Thyroid gland (tissue), 4 donors: ENCODE measurements at regions of chr20 and their contacts with region 1.

Region 1: DNA sequence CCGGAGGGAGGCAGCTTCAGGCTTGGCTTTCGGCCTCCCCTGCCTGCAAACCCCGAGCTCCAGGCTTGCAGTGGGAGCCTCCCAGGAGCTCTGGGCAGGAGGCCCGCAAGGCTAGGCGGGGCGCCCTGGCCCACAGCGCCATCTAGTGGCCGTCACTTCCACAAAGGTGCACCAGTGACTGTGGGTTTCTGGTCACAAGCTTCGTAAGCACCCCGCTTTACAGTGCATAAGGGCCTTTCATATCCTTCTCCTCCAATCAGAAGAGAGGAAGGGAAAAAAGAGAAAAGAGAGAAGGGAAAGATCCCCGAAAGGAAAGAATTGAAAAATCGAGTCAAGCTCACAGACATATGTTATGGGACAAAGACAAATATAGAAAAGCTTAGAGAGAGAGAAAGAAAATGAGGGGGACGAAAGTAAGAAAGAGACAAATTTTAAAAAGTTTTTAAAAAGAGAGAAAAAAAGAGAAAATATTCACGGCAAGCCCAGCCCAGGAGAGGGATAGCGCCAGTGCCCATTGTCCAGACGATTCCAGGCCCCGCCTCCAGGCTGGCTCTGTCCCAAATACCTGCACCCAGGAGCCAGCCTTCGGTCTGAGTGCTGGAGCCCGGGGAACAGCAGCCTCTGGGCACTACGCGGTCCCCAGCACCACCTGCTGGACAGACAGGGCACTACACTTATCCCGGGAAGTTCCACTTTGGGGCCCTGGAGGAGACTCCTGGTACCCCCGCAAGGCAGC is 207.1 kb downstream of the PREX1 start:
- DNase-seq: peak; percentile 94 to 96
- H3K4me3 ChIP-seq: peak overlapping the region in 1 of 3 donors; percentile 13
- H3K27ac ChIP-seq: no peak overlapping the region
- H3K4me1 ChIP-seq: peaks cover 0 to 14% of the 10 kb centered on the region in 2 donors
- H3K27me3 ChIP-seq: no peaks in the 10 kb centered on the region
- CTCF ChIP-seq: peak; percentile 76 to 97 (median 86)
- POLR2A ChIP-seq: no peak

Region 2: GRCh38 chr20:47665221-47665991 is 955.3 kb before region 1 on chr20:
- intact Hi-C with region 1: loop called (anchors 5 kb)
- DNase-seq: no peak
- H3K4me3 ChIP-seq: no peak overlapping the region
- H3K27ac ChIP-seq: no peak overlapping the region
- H3K4me1 ChIP-seq: peaks cover 0 to 5% of the 10 kb centered on the region in 2 donors
- H3K27me3 ChIP-seq: no peaks in the 10 kb centered on the region
- CTCF ChIP-seq: no peak
- POLR2A ChIP-seq: no peak

Region 3: DNA sequence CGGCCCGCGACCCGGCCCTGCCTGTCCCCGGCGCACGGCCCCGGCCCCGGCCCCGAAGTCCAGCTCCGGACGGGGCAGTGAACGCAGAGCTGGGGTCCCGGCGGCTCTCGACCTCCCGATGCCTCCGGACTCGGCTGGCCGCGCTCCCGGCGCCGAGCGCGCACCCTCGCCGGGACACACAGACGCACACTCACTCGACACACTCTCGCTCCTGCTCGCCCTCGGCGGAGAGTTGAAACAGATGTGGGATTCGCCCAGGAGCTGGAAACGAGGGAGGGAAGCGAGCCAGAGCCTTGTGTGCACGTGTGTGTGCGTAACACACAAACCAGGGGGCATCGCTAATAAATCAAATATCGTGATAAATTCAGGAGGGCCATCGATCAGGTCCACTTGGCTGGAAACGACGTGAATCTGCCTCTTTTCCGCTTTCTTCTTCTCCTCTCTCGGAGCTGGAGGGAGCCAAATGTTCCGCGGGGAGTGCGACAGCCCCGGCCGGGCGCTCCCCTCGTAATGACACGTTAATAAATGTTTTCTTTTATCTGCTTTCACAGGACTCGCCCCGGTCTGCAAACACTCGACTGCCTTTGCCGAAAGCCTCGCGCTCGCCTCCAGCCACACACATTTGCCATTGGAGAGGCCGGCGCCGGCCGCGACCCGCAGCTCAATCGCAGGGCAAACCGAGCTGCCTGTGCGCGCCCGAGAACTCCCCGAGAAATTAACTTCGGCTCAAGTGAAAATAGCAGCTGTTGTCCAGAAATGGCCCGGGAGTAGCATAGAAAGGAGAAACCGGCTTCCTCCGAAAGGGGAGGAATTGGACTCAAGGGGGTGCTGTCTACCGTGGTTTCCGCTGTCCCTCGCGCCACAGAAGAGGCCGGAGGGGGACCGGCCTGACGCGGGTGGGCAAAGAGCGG is 834.6 kb before region 1 on chr20:
- intact Hi-C with region 1: loop called (anchors 10 kb)
- DNase-seq: peak; percentile 54 to 66
- H3K4me3 ChIP-seq: peak overlapping the region in 2 of 3 donors; percentile 26 to 30
- H3K27ac ChIP-seq: peak overlapping the region; percentile 60 to 76 (median 66)
- H3K4me1 ChIP-seq: peaks cover 8 to 30% of the 10 kb centered on the region in 2 donors
- H3K27me3 ChIP-seq: no peaks in the 10 kb centered on the region
- CTCF ChIP-seq: peak in 4 of 6 experiments; percentile 48 to 76 (median 74)
- POLR2A ChIP-seq: peak in 1 of 2 donors; percentile 35

Region 4: GRCh38 chr20:48657475-48658470 is 37.1 kb after region 1 on chr20:
- intact Hi-C with region 1: no loop called
- DNase-seq: peak; percentile 61 to 69
- H3K4me3 ChIP-seq: no peak overlapping the region
- H3K27ac ChIP-seq: no peak overlapping the region
- H3K4me1 ChIP-seq: no peaks in the 10 kb centered on the region
- H3K27me3 ChIP-seq: no peaks in the 10 kb centered on the region
- CTCF ChIP-seq: peak; percentile 83 to 97 (median 94)
- POLR2A ChIP-seq: no peak

Region 5: GRCh38 chr20:48750947-48751635 is 130.4 kb after region 1 on chr20:
- intact Hi-C with region 1: no loop called
- DNase-seq: peak; percentile 15 to 20
- H3K4me3 ChIP-seq: no peak overlapping the region
- H3K27ac ChIP-seq: peak overlapping the region in 1 of 3 donors; percentile 36
- H3K4me1 ChIP-seq: no peaks in the 10 kb centered on the region
- H3K27me3 ChIP-seq: no peaks in the 10 kb centered on the region
- CTCF ChIP-seq: no peak
- POLR2A ChIP-seq: no peak

Region 6: GRCh38 chr20:49046087-49046900 is 425.6 kb after region 1 on chr20 and contains the start of gene CSE1L:
- intact Hi-C with region 1: no loop called
- DNase-seq: peak; percentile 94 to 96
- H3K4me3 ChIP-seq: peak within 1 kb of the TSS; percentile 68 to 95 (median 89)
- H3K27ac ChIP-seq: peak within 1 kb of the TSS; percentile 83 to 96 (median 92)
- H3K4me1 ChIP-seq: peaks cover 10 to 14% of the 10 kb centered on the region in 2 donors
- H3K27me3 ChIP-seq: no peaks in the 10 kb centered on the region
- CTCF ChIP-seq: peak in 3 of 6 experiments; percentile 48 to 58 (median 50)
- POLR2A ChIP-seq: peak; percentile 57 to 87
- total RNA-seq, gene CSE1L: 42.8 to 56.6 (median 45.0) TPM